Activated T-helper 1 cell treated with anti-CD3 and anti-CD28 coated beads, Interleukin-12 subunit alpha, Interleukin-12 subunit beta, Interleukin-2, Interleukin-4 antibody, amounts not matched to agents 30 ng/mL and 10 ng/mL and 1 ng/mL, durations not matched to agents 14 hours and 24 hours and 36 hours (primary cell): ENCODE measurements at regions of chr12 and their contacts with region 1.

Region 1: GRCh38 chr12:52221912-52222457 is 11.1 kb upstream of the KRT7 start:
- DNase-seq: peak; percentile 69
- H3K4me3 Mint-ChIP-seq: no peak overlapping the region
- H3K27ac Mint-ChIP-seq: no peak overlapping the region
- H3K4me1 Mint-ChIP-seq: peaks cover 13% of the 10 kb centered on the region
- H3K27me3 Mint-ChIP-seq: peaks cover 43% of the 10 kb centered on the region

Region 2: DNA sequence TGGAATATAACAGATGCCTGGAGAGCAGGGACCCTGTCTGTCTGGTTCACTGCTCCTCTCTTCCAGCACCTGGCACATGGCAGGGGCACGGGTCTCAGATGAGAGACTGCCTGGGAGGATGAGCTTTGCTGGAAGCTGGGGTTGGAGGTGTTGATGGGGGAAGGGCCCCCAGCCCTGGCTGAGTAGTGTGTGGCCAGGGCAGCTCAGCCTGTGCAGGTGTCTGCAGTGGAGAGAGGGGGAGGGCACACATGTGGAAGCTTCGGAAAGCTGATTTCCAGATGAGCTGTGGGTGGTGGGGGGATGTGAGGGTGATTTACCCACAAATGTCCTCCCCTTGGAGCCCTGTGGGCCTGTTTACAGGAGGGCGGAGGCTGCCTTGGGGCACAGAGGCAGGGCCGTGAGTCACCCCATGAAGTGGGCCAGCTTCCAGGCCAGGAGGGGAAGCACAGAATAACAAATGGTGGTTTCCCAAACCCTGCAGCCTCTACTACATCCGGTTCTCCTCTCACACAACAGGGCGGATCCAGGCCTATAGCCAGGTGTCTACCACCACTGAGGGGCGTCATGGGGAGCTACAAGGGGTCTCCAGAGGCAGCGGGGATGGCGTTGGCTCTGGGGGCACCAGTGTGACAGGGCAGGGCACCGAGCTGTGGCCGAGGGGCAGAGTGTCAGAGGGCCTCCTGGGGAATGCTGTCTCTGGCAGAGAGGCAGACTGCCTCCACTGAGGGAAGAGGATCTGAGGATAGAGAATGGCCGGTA is 22.1 kb after region 1 on chr12:
- intact Hi-C with region 1: loop called (anchors 1 kb)
- DNase-seq: peak; percentile 76
- H3K4me3 Mint-ChIP-seq: peak overlapping the region; percentile 94
- H3K27ac Mint-ChIP-seq: peak overlapping the region; percentile 98
- H3K4me1 Mint-ChIP-seq: peaks cover 73% of the 10 kb centered on the region
- H3K27me3 Mint-ChIP-seq: peaks cover 4% of the 10 kb centered on the region

Region 3: GRCh38 chr12:52278541-52279421 is 56.8 kb after region 1 on chr12:
- intact Hi-C with region 1: loop called (anchors 1 kb)
- DNase-seq: peak; percentile 68
- H3K4me3 Mint-ChIP-seq: peak overlapping the region; percentile 49
- H3K27ac Mint-ChIP-seq: no peak overlapping the region
- H3K4me1 Mint-ChIP-seq: peaks cover 23% of the 10 kb centered on the region
- H3K27me3 Mint-ChIP-seq: peaks cover 25% of the 10 kb centered on the region

Region 4: DNA sequence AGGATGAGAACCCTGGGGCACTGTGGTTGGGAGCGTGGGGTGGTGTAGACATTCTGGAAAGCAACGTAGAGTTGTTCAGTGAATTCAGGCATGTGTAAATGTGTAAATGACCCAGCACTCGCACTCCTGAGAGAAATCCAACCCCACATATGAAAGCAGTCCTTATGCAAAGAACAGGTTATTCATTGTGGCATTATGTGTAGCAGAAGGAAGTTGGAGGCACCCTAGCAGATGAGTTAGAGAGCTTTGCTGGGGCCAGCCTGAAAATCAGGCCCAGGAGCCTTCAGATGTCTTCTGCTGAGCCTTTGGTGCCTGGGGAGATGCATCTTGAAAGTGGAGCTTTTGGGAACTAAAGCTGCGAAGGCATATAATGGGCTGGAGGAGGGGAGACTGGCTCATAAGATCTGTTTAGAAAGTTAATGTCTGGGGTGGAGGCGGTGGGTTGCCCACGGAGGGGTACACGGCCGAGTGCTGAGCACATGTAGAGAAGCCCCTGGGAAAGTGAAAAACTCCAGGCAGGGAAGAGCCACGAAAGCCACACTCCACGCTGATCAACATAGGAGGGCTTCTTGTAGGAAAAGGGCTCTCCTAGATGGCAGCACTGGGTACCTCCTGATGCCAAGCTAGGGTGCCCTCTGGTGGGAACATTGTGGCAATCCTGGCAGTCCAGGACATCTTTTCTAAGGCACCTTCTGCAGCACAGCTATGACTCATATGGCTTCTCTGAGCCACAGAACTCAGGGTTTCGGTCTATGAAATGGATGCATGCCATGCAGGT is 105.3 kb after region 1 on chr12:
- intact Hi-C with region 1: loop called (anchors 1 kb)
- DNase-seq: peak; percentile 63
- H3K4me3 Mint-ChIP-seq: no peak overlapping the region
- H3K27ac Mint-ChIP-seq: no peak overlapping the region
- H3K4me1 Mint-ChIP-seq: peaks cover 14% of the 10 kb centered on the region
- H3K27me3 Mint-ChIP-seq: peaks cover 29% of the 10 kb centered on the region